ENCODE measurements at regions of chr6 and their contacts with region 1.

Region 1: DNA sequence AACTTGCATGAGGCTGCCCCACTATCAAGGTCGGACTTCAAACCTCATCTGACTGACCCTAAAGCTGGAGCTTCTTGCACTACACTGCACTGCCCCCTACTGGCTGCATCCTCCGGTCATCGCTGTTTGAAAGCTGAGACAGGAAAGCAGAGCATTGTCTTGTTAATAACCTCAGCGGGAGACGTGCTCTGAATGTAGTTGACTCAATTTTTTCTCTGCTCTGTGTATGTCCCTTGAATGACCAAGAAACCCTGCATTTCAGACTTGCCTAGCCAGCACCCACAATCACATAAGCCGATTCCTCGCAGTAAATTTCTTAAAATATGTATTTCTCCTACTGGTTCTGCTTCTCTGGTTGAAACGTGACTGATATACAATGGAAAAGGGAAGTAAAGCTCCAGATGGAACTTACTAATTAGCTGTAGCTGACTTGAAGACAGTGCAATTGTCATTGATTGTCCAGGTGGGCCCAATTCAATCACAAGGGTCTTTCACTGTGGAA is 27.8 kb downstream of the TCF21 start:
- DNase-seq: peak; percentile 84
- H3K4me3 Mint-ChIP-seq: no peak overlapping the region
- H3K27ac Mint-ChIP-seq: no peak overlapping the region
- H3K4me1 Mint-ChIP-seq: peaks cover 4% of the 10 kb centered on the region
- H3K27me3 Mint-ChIP-seq: peaks cover 7% of the 10 kb centered on the region

Region 2: GRCh38 chr6:133523816-133524215 is 392.9 kb before region 1 on chr6:
- CTCF ChIA-PET with region 1: no interaction called
- POLR2A ChIA-PET with region 1: no interaction called
- intact Hi-C with region 1: no loop called
- DNase-seq: no peak
- H3K4me3 Mint-ChIP-seq: no peak overlapping the region
- H3K27ac Mint-ChIP-seq: no peak overlapping the region
- H3K4me1 Mint-ChIP-seq: no peaks in the 10 kb centered on the region
- H3K27me3 Mint-ChIP-seq: peaks cover 4% of the 10 kb centered on the region

Region 3: DNA sequence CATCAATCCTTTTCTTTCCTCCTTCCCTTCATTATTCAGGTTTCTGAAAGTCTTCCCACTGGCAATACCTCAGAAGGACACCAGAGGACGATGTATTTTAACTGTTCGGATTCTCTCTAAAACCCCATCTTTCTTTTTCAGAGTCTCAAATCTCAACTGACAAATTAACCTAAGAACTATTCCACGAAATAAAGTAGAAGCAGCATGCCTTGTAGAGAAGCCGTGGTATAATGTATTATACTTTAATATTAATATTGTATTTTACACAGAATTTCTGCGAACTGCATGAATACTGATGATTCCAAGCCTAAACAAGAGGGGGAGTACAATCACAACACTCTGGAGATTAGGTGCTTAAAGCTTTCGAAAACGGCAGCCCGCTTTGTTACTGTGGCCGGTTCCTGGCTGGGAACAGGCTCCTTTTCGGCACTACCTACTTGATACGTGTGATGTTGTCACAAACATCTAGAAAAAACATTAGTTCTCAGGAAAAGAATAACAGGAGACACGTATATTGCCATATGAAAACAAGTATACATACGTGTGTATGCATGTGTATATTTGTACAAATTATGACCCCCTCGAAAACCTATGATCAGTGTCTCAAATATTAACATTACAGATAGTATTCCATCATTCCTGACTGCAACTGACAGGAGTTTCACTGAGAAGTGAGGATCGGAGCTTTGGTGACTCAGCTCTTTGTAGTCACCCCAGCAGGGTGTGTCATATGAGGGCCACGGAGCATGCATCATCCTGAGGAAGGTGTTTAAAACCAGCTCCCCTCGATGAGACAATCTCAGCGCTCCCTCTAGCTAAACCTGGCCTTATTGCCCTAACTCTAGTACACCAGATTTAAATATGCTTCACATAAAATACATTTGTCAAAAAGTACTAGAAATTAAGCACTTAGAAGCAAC is 347.5 kb before region 1 on chr6:
- CTCF ChIA-PET with region 1: interaction called, 34 read pairs
- POLR2A ChIA-PET with region 1: no interaction called
- intact Hi-C with region 1: loop called (anchors 1 kb)
- DNase-seq: peak; percentile 33
- H3K4me3 Mint-ChIP-seq: no peak overlapping the region
- H3K27ac Mint-ChIP-seq: no peak overlapping the region
- H3K4me1 Mint-ChIP-seq: peaks cover 3% of the 10 kb centered on the region
- H3K27me3 Mint-ChIP-seq: peaks cover 30% of the 10 kb centered on the region

Region 4: GRCh38 chr6:133609404-133610270 is 307.1 kb before region 1 on chr6:
- CTCF ChIA-PET with region 1: no interaction called
- POLR2A ChIA-PET with region 1: no interaction called
- intact Hi-C with region 1: no loop called
- DNase-seq: no peak
- H3K4me3 Mint-ChIP-seq: no peak overlapping the region
- H3K27ac Mint-ChIP-seq: no peak overlapping the region
- H3K4me1 Mint-ChIP-seq: no peaks in the 10 kb centered on the region
- H3K27me3 Mint-ChIP-seq: no peaks in the 10 kb centered on the region

Region 5: DNA sequence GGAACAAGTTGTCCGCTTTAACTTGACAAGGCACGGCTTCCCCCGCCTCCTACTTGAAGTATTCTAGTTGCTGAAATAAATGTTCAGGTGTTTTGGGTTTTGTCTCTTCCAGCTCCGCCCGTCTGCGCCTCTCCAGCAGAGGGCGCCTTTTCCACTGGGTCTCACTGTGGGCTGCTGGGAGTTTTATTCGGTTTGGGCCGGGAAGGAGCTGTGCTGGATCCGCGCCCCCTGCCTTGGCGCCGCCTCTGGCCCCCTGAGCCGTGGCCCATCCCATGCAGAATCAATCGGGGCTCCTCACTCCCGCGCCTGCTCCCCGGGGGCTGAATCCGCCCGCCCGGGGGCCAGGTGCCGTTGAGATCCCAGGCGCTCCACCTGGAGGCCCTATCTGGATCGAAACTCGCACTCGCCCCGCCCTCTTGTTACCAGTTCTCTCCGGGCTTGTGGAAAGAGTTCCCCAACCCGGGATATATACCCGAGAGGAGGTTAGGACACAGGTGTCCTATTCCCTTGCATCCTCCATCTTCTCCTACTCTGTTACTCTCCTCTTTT is 78.8 kb before region 1 on chr6:
- CTCF ChIA-PET with region 1: interaction called, 181 read pairs
- POLR2A ChIA-PET with region 1: no interaction called
- intact Hi-C with region 1: loop called (anchors 1 kb)
- DNase-seq: peak; percentile 71
- H3K4me3 Mint-ChIP-seq: peak overlapping the region; percentile 60
- H3K27ac Mint-ChIP-seq: no peak overlapping the region
- H3K4me1 Mint-ChIP-seq: peaks cover 3% of the 10 kb centered on the region
- H3K27me3 Mint-ChIP-seq: peaks cover 15% of the 10 kb centered on the region

Region 6: GRCh38 chr6:133906050-133906449 is 10.7 kb before region 1 on chr6:
- CTCF ChIA-PET with region 1: interaction called, 16 read pairs
- POLR2A ChIA-PET with region 1: no interaction called
- intact Hi-C with region 1: no loop called
- DNase-seq: no peak
- H3K4me3 Mint-ChIP-seq: no peak overlapping the region
- H3K27ac Mint-ChIP-seq: no peak overlapping the region
- H3K4me1 Mint-ChIP-seq: no peaks in the 10 kb centered on the region
- H3K27me3 Mint-ChIP-seq: peaks cover 50% of the 10 kb centered on the region

Region 7: GRCh38 chr6:134216301-134217010 is 299.8 kb after region 1 on chr6:
- CTCF ChIA-PET with region 1: no interaction called
- POLR2A ChIA-PET with region 1: no interaction called
- intact Hi-C with region 1: no loop called
- DNase-seq: no peak
- H3K4me3 Mint-ChIP-seq: no peak overlapping the region
- H3K27ac Mint-ChIP-seq: no peak overlapping the region
- H3K4me1 Mint-ChIP-seq: no peaks in the 10 kb centered on the region
- H3K27me3 Mint-ChIP-seq: no peaks in the 10 kb centered on the region

Measured in activated CD4-positive, alpha-beta memory T cell treated with anti-CD3 and anti-CD28 coated beads for 36 hours (primary cell).